Posterior vena cava (tissue), 2 donors: ENCODE measurements at regions of chr17 and their contacts with region 1.

Region 1: DNA sequence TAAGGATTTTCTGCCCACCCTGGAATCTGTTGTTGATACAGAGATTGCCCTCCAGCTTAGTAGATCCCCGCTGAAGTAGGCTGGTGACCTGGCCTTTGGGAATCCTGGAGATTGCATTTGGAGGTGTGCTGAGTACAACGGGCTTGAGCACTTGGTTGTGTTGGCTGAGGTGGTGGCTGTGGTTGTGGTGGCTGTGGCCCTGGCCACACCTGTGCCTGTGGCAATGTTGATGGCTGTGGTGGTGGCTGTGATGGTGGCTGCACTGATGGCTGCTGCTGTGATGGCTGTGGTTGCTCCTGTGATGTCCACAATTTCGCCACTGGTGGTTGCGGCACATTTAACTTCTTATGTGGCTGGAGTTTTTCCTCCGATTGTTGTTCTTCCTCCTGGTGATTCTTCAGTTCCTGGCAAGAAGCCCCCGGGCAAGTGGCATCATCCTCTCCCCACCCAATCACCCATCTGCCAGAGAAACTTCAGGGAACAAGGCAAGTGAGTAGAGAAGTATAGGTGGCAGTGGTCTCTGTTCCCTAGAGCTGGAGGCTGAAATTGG is 4.2 kb downstream of the CCDC200 start:
- DNase-seq: no peak

Region 2: DNA sequence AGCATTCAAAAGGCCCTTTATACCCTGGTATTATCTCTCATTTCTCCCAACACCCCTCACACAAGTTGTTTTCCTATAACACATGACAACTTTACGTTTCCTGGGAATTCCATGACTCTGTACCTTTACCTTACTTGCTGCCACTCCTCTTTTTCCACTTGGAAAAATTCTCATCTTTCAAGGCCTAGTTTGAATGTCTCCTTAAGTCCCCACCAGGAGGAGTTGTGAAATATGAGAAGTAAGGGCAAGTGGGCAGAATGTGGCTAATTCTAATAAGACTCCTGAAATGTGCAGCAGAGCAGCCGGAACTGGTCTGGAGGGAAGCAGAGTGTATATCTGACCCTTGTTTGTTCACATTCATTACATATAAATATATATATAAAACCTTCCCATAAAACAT is 138.7 kb before region 1 on chr17:
- intact Hi-C with region 1: loop called in 1 of 2 experiments (anchors 5 kb)
- DNase-seq: no peak

Region 3: GRCh38 chr17:43175816-43176570 is 48.2 kb before region 1 on chr17:
- intact Hi-C with region 1: no loop called
- DNase-seq: no peak

Region 4: DNA sequence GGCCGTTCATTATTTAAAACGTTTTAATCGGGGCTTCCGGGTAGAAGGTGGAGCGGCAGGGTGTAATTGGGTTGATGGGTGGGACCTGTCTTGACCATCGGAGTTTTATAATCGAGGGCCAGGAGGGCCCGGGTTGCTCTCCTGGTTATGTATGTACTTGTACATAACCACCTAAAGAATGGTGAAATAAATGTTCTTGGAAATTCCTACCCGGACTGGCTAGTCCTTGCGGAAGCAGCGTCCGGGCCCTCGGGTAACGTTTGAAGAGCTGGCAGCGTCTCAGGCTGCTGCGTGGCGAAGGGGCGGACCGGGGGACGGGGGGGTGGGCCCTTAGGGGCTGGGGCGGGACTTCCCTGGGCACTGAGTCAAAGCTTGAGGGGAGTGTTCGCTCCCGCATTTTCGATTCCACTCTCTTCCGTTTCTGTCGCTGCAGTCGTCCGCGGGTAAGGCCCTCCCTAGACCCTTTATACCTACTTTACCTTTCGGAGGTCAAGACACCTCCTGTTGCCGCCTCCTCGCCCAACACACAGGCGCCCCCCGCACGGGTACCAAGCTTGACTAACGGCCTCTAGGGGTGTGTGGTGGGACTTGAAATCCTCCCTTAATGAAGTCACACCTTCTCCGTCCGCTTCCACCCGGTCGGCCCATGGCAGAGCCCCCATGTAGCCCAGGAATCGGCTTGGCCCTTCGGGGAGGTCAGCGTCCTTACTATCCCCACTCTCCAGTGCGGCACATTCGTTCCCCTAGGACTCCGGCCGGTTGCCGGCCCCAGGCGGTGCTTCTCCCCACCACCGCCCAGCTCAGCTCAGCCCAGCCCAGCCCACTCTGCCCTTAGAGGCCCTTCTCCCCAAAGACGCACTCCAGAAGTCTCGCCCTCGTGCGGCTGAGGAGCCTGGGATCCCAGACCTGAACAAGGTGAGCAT is 12.5 kb before region 1 on chr17 and contains the start of gene TMEM106A:
- intact Hi-C with region 1: no loop called
- DNase-seq: peak; percentile 94
- total RNA-seq, gene TMEM106A: 18.4 to 19.9 TPM